Vagina (tissue), 2 donors: ENCODE measurements at regions of chr15 and their contacts with region 1.

Region 1: DNA sequence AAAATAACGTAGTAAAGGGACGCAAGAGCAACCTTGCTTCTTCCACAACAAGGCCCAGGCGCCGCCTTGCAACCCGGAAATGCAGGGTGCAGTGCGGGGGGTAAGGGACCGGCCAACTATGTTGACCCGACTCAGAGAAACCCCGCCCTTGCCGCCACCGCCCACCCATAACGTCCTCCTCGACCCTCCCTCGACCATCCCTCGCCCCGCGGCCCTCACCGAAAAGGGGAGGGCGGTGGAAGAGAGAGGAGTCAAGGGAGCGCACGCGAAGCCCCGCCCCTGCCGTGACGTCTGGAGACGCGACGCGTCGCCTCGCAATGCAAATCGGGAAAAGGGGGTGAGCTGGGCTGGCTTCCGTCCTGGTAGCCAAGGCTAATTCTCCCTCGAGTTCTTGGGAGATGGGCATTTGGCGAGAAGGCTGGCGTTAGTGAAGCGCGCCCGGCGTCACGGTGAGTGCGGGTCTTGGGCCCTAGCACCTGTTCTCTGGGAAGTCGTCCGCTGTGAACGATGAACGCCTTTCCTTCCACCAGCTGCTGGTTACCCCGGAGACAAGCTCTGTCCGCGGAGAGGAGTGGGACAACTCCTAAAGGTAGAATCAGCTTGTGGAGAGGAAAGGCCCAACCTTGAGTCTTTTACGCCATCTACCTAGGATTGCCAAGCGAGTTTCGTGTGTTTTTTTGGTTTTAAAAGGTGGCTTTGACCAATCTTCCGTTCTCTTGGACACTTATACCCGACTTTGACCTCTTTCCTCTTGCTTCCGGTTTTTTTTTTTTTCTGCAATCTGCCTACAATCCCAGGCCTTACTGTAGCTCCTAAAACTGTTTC is at the start of gene USP8:
- DNase-seq: peak in 1 of 2 donors; percentile 96
- H3K4me3 ChIP-seq: peak within 1 kb of the TSS; percentile 82 to 88
- H3K27ac ChIP-seq: peak within 1 kb of the TSS; percentile 88
- H3K4me1 ChIP-seq: peaks cover 33% of the 10 kb centered on the region
- H3K27me3 ChIP-seq: no peaks in the 10 kb centered on the region
- CTCF ChIP-seq: no peak
- POLR2A ChIP-seq: peak in 1 of 2 donors; percentile 49
- total RNA-seq, gene USP8: 33.9 TPM

Region 2: GRCh38 chr15:50234771-50235170 is 189.5 kb before region 1 on chr15:
- intact Hi-C with region 1: no loop called
- DNase-seq: no peak
- H3K4me3 ChIP-seq: no peak overlapping the region
- H3K27ac ChIP-seq: no peak overlapping the region
- H3K4me1 ChIP-seq: no peaks in the 10 kb centered on the region
- H3K27me3 ChIP-seq: no peaks in the 10 kb centered on the region
- CTCF ChIP-seq: no peak
- POLR2A ChIP-seq: no peak

Region 3: GRCh38 chr15:50354838-50355618 is 69.2 kb before region 1 on chr15 and contains the start of gene GABPB1:
- intact Hi-C with region 1: loop called (anchors 10 kb)
- DNase-seq: peak; percentile 93 to 96
- H3K4me3 ChIP-seq: peak within 1 kb of the TSS; percentile 84 to 99
- H3K27ac ChIP-seq: peak within 1 kb of the TSS; percentile 97
- H3K4me1 ChIP-seq: peaks cover 54% of the 10 kb centered on the region
- H3K27me3 ChIP-seq: no peaks in the 10 kb centered on the region
- CTCF ChIP-seq: peak in 1 of 3 experiments; percentile 10
- POLR2A ChIP-seq: peak in 1 of 2 donors; percentile 64
- total RNA-seq, gene GABPB1: 13.3 TPM